Prostate gland (tissue), 2 donors: ENCODE measurements at regions of chr22 and their contacts with region 1.

Region 1: DNA sequence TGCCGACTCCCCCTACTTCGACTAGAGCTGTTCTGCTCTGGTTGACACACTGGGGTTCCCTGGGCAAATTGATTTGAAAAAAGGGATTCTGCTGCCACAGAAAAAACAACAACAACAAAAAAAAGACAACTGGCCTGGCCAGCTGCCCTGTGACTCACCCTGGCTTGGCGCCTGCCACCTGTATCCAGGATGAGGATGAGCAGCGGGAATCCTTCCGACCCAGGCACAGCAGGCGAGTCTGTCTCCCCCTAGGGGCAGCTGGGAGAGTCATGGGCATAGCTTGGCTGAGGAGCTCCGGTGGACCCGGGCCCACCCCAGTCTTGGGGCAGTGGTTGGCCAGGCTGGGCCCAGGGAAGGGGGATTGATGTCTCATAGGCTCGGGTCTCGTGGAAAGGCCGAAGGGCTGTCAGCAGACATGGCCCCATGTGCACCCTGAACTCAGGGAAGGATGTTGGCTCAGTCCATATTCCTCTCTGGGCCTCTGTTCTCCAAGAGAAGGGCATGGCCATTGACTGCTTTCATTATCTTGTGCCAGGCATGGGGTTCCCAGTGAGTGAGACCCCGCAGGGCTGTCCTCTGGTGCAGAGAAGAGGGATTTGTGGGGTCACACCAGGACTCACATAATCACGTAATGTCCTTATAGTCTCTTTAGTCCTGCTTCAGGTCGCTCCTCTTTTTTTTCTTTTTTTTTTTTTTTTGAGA is 10.4 kb upstream of the SUN2 start:
- DNase-seq: peak; percentile 68
- H3K4me3 ChIP-seq: no peak overlapping the region
- H3K27ac ChIP-seq: no peak overlapping the region
- H3K4me1 ChIP-seq: no peaks in the 10 kb centered on the region
- H3K27me3 ChIP-seq: no peaks in the 10 kb centered on the region
- CTCF ChIP-seq: peak; percentile 31 to 75 (median 68)
- POLR2A ChIP-seq: no peak

Region 2: DNA sequence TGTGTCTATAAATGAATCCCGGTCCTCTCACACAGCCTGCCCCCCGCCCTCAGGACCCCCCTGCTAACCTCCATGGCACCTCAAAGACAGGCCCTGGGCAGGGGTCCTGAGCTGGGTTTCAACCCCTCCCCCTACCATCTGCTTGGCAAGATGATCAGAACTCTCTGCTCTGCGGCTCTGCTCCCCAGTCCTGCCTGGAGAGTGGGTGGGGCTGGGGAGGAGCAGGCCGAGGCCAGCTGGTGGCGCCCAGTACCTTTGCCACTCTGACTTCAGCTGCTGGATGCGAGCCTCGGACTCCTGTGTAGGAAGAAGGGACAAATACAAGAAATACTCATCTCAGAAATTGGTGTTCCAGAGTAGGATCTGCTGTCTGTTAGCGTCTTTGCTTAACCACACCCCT is 25.5 kb before region 1 on chr22:
- intact Hi-C with region 1: no loop called
- DNase-seq: no peak
- H3K4me3 ChIP-seq: no peak overlapping the region
- H3K27ac ChIP-seq: no peak overlapping the region
- H3K4me1 ChIP-seq: no peaks in the 10 kb centered on the region
- H3K27me3 ChIP-seq: no peaks in the 10 kb centered on the region
- CTCF ChIP-seq: no peak
- POLR2A ChIP-seq: no peak

Region 3: DNA sequence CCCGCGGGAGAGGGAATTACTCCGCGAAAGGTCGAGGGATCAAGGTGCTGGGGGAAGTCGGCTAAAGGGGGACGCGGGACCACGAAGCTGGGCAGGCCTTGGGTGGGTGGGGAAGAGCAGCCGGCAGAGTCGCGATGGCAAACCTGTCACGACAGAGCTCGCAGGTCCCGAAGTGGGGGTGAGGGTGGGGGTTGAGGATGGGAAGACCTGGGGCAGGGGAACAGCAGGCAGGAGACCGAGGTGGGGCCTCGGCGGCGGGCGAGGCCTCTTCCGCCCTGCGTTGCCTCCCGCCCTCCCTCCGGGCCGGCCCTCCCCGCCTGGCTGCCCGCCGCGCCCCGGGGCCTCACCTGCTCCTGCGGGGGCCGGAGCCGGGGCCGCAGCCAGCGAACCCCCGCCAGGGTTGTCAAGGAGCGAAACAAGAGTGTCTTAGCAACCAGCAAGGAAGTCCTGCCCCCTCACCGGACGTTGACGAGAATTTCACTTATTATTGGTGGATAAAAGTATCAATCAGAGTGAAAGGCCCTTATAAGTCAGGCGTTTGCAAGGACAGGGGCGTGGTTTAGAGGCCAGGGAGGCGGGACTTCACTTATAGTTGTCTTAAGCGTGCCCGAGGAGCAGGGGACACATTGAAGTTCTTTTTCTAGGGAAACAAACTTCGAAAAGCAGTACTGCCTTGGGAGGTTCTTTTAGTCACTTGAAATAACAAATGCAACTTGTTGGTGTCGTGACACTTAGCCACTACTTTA is 27.7 kb after region 1 on chr22 and contains the start of gene DNAL4:
- intact Hi-C with region 1: no loop called
- DNase-seq: peak; percentile 96
- H3K4me3 ChIP-seq: peak within 1 kb of the TSS; percentile 54 to 76
- H3K27ac ChIP-seq: peak within 1 kb of the TSS; percentile 53 to 65
- H3K4me1 ChIP-seq: no peaks in the 10 kb centered on the region
- H3K27me3 ChIP-seq: no peaks in the 10 kb centered on the region
- CTCF ChIP-seq: peak in 2 of 4 experiments; percentile 5 to 19
- POLR2A ChIP-seq: peak; percentile 49
- total RNA-seq, gene DNAL4: 36.9 to 41.8 TPM

Region 4: GRCh38 chr22:38811241-38811640 is 45.0 kb after region 1 on chr22:
- intact Hi-C with region 1: no loop called
- DNase-seq: no peak
- H3K4me3 ChIP-seq: no peak overlapping the region
- H3K27ac ChIP-seq: no peak overlapping the region
- H3K4me1 ChIP-seq: no peaks in the 10 kb centered on the region
- H3K27me3 ChIP-seq: no peaks in the 10 kb centered on the region
- CTCF ChIP-seq: no peak
- POLR2A ChIP-seq: no peak

Region 5: DNA sequence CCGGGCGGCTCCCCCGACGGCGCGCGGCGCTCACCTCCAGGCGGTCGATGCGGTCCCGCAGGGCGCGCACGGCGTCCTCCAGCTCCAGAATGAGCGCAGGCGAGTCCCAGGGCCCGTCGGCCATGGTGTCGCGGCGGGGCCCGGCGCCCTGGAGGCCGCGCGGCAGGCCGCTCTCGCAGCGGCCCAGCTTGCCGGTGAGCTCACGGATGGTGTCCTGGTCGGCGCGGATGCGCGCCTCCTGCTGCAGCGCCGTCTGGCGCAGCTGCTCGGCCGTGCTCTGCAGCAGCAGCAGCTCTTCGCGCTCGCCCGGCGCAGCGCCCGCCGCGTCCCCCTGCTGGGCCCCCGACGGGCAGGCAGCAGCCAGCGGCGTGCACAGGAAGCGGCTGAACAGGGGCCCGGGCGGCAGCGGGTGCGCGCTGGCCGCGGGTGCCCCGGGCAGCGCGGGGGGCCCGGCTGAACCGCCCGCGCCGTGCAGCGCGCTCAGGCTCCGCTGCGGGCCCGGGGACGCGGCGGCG is 77.0 kb after region 1 on chr22:
- intact Hi-C with region 1: loop called (anchors 5 kb)
- DNase-seq: no peak
- H3K4me3 ChIP-seq: peak overlapping the region; percentile 45 to 53
- H3K27ac ChIP-seq: peak overlapping the region; percentile 44 to 60
- H3K4me1 ChIP-seq: peaks cover 6% of the 10 kb centered on the region
- H3K27me3 ChIP-seq: no peaks in the 10 kb centered on the region
- CTCF ChIP-seq: peak in 2 of 4 experiments; percentile 28 to 53
- POLR2A ChIP-seq: no peak

Region 6: DNA sequence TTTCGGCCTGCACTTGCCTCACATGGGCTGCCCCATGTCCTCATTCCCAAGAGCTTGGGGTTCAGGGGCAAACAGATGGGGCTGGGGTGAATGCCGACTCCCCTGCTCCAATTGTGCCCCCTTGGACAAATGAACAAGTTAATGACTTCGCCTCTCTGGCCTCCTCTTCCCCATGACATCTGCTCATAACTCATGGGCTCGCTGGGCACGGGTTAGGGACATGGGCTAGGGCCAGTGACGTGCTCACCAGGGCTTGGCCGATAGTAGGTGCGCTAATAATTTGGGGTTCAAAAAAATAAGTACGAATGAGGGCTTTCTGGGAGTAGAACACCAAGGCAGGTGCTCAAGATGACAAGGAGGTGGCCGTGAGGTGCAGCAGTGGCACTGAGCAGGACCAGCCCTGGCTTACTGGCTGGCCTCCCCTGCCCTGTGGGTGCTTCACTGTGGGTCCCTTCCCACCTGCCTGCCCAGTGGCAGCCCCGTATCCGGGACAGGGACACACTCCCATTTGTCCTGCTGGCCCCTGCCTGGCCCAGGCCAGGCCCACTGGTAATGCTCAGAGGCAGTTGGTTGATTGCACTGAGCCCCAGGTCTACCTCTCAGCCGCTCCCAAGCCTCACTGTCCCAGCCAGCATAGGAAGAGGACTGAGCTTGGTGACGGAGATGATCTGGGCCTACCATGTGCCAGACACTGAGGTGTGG is 93.5 kb after region 1 on chr22:
- intact Hi-C with region 1: no loop called
- DNase-seq: no peak
- H3K4me3 ChIP-seq: no peak overlapping the region
- H3K27ac ChIP-seq: no peak overlapping the region
- H3K4me1 ChIP-seq: peaks cover 6% of the 10 kb centered on the region
- H3K27me3 ChIP-seq: no peaks in the 10 kb centered on the region
- CTCF ChIP-seq: no peak
- POLR2A ChIP-seq: no peak

Region 7: GRCh38 chr22:38872172-38872830 is 106.1 kb after region 1 on chr22 and contains the start of gene CBX6:
- intact Hi-C with region 1: loop called (anchors 5 kb)
- DNase-seq: peak; percentile 93
- H3K4me3 ChIP-seq: peak within 1 kb of the TSS; percentile 66 to 81
- H3K27ac ChIP-seq: peak within 1 kb of the TSS; percentile 93 to 94
- H3K4me1 ChIP-seq: peaks cover 9% of the 10 kb centered on the region
- H3K27me3 ChIP-seq: no peaks in the 10 kb centered on the region
- CTCF ChIP-seq: peak in 2 of 4 experiments; percentile 14 to 16
- POLR2A ChIP-seq: peak; percentile 60
- total RNA-seq, gene CBX6: 39.9 to 56.2 TPM

Region 8: GRCh38 chr22:38927033-38927781 is 161.0 kb after region 1 on chr22:
- intact Hi-C with region 1: loop called (anchors 5 kb)
- DNase-seq: peak; percentile 62
- H3K4me3 ChIP-seq: peak overlapping the region; percentile 14 to 22
- H3K27ac ChIP-seq: peak overlapping the region; percentile 5 to 34
- H3K4me1 ChIP-seq: peaks cover 21% of the 10 kb centered on the region
- H3K27me3 ChIP-seq: no peaks in the 10 kb centered on the region
- CTCF ChIP-seq: peak in 3 of 4 experiments; percentile 42 to 59 (median 59)
- POLR2A ChIP-seq: no peak

Region 9: DNA sequence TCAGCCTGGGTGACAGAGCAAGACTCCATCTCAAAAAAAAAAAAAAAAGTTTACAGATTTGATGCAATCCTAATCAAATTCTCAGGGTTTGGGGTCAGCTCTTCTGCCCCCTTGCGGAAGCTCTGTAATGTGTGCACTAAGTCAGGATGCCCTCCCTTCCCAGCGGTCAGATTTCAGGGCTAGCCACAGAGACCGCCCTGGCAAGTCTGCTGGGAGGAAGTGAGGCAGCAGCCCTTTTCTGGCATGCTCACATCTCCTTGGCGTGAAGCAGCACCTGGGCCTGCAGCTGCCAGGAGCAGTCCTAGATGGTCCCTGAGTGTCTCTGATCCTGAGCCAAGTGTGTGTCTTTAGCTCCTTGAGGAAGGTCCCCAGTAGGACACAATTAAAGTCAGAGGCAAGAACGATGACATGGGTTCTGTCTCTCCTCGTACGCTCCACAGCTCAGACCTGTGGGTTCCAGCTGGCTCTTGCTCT is 237.0 kb after region 1 on chr22:
- intact Hi-C with region 1: loop called (anchors 5 kb)
- DNase-seq: peak; percentile 66
- H3K4me3 ChIP-seq: no peak overlapping the region
- H3K27ac ChIP-seq: no peak overlapping the region
- H3K4me1 ChIP-seq: no peaks in the 10 kb centered on the region
- H3K27me3 ChIP-seq: no peaks in the 10 kb centered on the region
- CTCF ChIP-seq: peak; percentile 29 to 87 (median 71)
- POLR2A ChIP-seq: no peak

Region 10: GRCh38 chr22:39123751-39124601 is 357.7 kb after region 1 on chr22:
- intact Hi-C with region 1: loop called (anchors 10 kb)
- DNase-seq: no peak
- H3K4me3 ChIP-seq: no peak overlapping the region
- H3K27ac ChIP-seq: no peak overlapping the region
- H3K4me1 ChIP-seq: no peaks in the 10 kb centered on the region
- H3K27me3 ChIP-seq: no peaks in the 10 kb centered on the region
- CTCF ChIP-seq: no peak
- POLR2A ChIP-seq: no peak